Lower lobe of right lung (tissue), 2 donors: ENCODE measurements at regions of chr5 and their contacts with region 1.

Region 1: GRCh38 chr5:56270568-56271392 is 37.6 kb upstream of the ANKRD55 start:
- DNase-seq: peak; percentile 83
- ATAC-seq: peak; percentile 98 to 99
- H3K4me3 ChIP-seq: no peak overlapping the region
- H3K27ac ChIP-seq: no peak overlapping the region
- H3K4me1 ChIP-seq: peaks cover 18% of the 10 kb centered on the region
- H3K27me3 ChIP-seq: no peaks in the 10 kb centered on the region
- CTCF ChIP-seq: peak; percentile 97

Region 2: DNA sequence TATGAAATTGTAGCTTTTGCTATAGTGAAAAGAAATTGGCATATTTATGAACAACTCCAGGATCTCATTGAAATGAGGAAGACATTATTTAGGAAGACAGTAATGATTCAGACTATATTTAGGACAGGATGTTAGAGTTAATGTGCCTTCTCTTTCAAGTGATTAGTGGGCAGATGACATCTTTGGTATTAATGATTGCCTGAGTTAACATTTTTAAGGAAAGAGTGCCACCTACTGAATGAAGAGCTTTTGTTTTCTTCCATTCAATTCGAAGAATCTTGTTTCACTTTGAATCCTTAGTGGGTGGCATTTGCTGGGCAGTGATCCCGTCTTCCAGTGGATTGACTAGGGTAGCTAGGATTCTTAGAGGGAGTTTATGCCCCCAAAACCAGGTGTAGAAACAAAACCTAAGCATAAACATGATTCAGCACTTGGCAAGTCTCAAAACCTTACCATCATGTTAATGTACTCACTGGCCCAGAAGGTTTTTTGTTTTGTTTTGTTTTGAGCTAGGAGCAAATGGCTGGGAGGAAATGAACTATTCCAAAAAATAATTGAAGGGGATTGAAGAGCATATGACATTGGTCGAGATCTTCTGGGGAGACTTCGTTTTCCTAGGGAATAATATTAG is 567.7 kb after region 1 on chr5:
- intact Hi-C with region 1: loop called (anchors 5 kb)
- DNase-seq: no peak
- ATAC-seq: peak; percentile 48 to 80
- H3K4me3 ChIP-seq: peak overlapping the region; percentile 9
- H3K27ac ChIP-seq: peak overlapping the region; percentile 16
- H3K4me1 ChIP-seq: peaks cover 65% of the 10 kb centered on the region
- H3K27me3 ChIP-seq: no peaks in the 10 kb centered on the region
- CTCF ChIP-seq: peak; percentile 58

Region 3: GRCh38 chr5:57231607-57232006 is 960.8 kb after region 1 on chr5:
- intact Hi-C with region 1: loop called (anchors 10 kb)
- DNase-seq: no peak
- ATAC-seq: no peak
- H3K4me3 ChIP-seq: no peak overlapping the region
- H3K27ac ChIP-seq: no peak overlapping the region
- H3K4me1 ChIP-seq: peaks cover 10% of the 10 kb centered on the region
- H3K27me3 ChIP-seq: no peaks in the 10 kb centered on the region
- CTCF ChIP-seq: no peak